H1 (cell line): ENCODE measurements at regions of chr3 and their contacts with region 1.

Region 1: GRCh38 chr3:115922681-115923347 is 299.5 kb downstream of the GAP43 start:
- DNase-seq: peak; percentile 17 to 64
- H3K4me3 ChIP-seq: no peak overlapping the region
- H3K27ac ChIP-seq: no peak overlapping the region
- H3K4me1 ChIP-seq: peaks cover 0 to 5% (median 0%) of the 10 kb centered on the region in 4 experiments; a peak in 1 of 7 replicates
- H3K27me3 ChIP-seq: no peaks in the 10 kb centered on the region
- CTCF ChIP-seq: peak in 2 of 3 experiments; percentile 70 to 72; a peak in 3 of 4 replicates
- EP300 ChIP-seq: no peak
- POLR2A ChIP-seq: no peak
- RAD21 ChIP-seq: peak; percentile 74 to 83

Region 2: GRCh38 chr3:115819785-115820384 is 102.9 kb before region 1 on chr3:
- CTCF ChIA-PET with region 1: interaction called, 13 read pairs
- POLR2A ChIA-PET with region 1: no interaction called
- DNase-seq: peak in 1 of 2 experiments; percentile 10
- H3K4me3 ChIP-seq: no peak overlapping the region
- H3K27ac ChIP-seq: no peak overlapping the region
- H3K4me1 ChIP-seq: no peaks in the 10 kb centered on the region
- H3K27me3 ChIP-seq: no peaks in the 10 kb centered on the region
- CTCF ChIP-seq: peak in 2 of 3 experiments; percentile 98 to 100; a peak in 3 of 4 replicates
- EP300 ChIP-seq: no peak
- POLR2A ChIP-seq: no peak
- RAD21 ChIP-seq: peak; percentile 91 to 93

Region 3: DNA sequence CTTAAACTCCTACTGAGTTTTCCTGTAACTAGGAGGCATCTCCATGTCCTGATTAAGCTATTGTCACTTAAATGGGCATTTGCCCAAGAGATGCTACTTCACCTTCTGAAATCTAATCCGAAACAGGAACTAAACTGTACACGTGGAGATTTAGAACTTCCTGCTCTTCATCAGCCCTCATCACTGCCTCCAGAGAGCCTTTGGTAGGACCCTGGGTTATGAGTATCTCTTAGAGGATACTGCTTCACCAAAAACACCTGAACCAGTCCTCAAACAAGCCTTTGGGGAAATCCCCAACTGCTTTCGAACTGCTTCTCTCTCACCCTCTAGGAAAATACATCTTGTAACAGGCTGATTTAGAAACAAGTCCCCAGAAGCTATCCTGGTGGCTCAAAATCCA is 20.8 kb after region 1 on chr3:
- CTCF ChIA-PET with region 1: interaction called, 14 read pairs
- POLR2A ChIA-PET with region 1: no interaction called
- DNase-seq: no peak
- H3K4me3 ChIP-seq: no peak overlapping the region
- H3K27ac ChIP-seq: no peak overlapping the region
- H3K4me1 ChIP-seq: no peaks in the 10 kb centered on the region
- H3K27me3 ChIP-seq: no peaks in the 10 kb centered on the region
- CTCF ChIP-seq: no peak
- EP300 ChIP-seq: no peak
- POLR2A ChIP-seq: no peak
- RAD21 ChIP-seq: no peak